Activated naive CD8-positive, alpha-beta T cell treated with anti-CD3 and anti-CD28 coated beads, Interleukin-2, amount 10 ng/mL, durations not matched to agents 7 days and 5 days (primary cell): ENCODE measurements at regions of chr9 and their contacts with region 1.

Region 1: DNA sequence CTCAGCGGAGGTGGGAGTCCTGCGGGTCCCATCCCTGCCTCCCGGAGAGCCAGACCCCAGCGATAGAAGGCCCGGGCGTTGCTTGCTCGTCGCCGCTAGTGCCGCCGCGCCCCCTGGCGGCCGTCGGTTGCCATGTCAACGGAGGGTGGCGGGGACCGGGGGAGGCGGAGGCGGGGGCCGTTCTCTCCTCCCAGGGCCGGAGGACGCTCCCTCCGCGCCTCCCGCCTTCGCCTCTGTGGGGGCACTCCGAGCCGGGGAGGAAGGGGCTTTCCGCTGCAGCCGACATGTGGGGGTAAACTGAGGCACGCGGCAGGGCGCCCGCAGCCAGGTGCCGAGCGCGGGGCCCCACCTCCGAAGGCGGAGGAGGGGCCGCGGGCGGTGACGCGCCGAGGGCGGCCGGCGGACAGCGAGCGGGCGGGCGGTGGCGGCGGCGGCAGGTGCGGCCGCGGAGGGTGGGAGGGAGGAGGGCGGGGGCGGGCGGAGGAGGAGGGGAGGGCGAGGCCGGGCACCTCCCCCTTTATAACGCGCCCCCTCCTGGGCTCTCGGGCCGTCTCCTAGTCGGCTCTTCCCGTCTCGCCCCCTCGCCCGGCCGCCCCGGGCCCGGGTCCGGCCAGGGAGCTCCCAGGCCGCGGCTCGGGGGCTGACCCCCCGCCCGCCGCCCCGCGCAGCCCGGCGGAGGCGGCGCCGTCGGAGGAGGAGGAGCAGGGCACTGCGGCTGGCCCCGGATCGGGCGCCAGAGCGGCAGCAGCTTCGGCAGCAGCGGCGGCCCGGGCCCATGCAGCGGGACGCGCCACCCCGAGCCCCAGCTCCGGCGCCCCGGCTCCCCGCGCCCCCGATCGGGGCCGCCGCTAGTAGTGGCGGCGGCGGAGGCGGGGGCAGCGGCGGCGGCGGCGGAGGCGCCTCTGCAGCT is 556 bp upstream of the CDK9 start:
- DNase-seq: peak; percentile 95
- ATAC-seq: peak; percentile 32
- H3K4me3 Mint-ChIP-seq: peak overlapping the region; percentile 90
- H3K27ac Mint-ChIP-seq: peak overlapping the region; percentile 88
- H3K4me1 Mint-ChIP-seq: peaks cover 56% of the 10 kb centered on the region
- H3K27me3 Mint-ChIP-seq: no peaks in the 10 kb centered on the region

Region 2: GRCh38 chr9:127637322-127637847 is 147.9 kb before region 1 on chr9:
- POLR2A ChIA-PET with region 1: no interaction called
- DNase-seq: no peak
- ATAC-seq: no peak
- H3K4me3 Mint-ChIP-seq: no peak overlapping the region
- H3K27ac Mint-ChIP-seq: no peak overlapping the region
- H3K4me1 Mint-ChIP-seq: peaks cover 6% of the 10 kb centered on the region
- H3K27me3 Mint-ChIP-seq: no peaks in the 10 kb centered on the region

Region 3: DNA sequence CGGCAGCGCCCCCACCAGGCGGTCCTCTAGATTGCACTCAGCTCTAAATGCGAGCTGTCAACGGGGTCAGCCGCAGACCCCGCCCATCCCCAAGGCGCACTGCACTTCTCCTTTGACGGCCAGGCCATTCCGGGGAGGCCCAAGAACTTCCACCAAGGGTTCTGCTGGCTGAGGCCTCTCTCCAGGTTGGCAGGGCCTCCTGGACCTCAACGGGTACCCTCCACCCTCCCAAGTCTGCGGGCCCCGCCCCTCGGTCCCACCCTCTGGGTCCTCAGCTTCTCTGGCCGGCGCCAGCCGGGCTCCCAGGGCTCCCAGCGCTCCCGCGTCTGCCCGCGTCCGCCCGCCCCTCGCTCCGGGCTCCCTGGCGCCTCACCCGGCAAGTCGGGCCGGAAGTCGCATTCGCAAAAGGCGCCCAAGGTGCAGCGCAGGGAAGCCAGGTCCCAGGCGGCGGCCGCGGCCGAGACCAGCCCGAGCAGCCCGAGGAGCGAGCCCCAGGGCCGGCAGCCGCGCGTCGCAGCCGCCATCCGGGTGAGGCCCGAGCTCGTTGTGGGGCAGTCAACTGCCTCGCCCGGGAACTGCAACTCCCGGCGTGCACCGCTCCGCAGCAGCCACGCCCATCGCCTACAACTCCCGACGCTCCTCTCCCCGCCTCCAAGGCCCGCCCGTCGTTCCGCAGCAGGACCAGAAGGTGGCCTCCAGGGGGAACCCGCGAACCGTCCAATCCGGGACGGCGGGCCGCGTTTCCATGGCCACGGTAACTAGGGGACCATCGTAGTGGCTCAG is 50.3 kb before region 1 on chr9 and contains the start of gene TOR2A:
- POLR2A ChIA-PET with region 1: interaction called, 29 read pairs
- DNase-seq: peak; percentile 98
- ATAC-seq: peak; percentile 88
- H3K4me3 Mint-ChIP-seq: peak within 1 kb of the TSS; percentile 87
- H3K27ac Mint-ChIP-seq: peak within 1 kb of the TSS; percentile 93
- H3K4me1 Mint-ChIP-seq: peaks cover 14% of the 10 kb centered on the region
- H3K27me3 Mint-ChIP-seq: no peaks in the 10 kb centered on the region
- total RNA-seq, gene TOR2A: 21.7 to 24.4 TPM

Region 4: GRCh38 chr9:127796225-127796813 is 11.0 kb after region 1 on chr9:
- POLR2A ChIA-PET with region 1: interaction called, 16 read pairs
- DNase-seq: no peak
- ATAC-seq: peak; percentile 11
- H3K4me3 Mint-ChIP-seq: peak overlapping the region; percentile 69
- H3K27ac Mint-ChIP-seq: peak overlapping the region; percentile 73
- H3K4me1 Mint-ChIP-seq: peaks cover 24% of the 10 kb centered on the region
- H3K27me3 Mint-ChIP-seq: no peaks in the 10 kb centered on the region

Region 5: DNA sequence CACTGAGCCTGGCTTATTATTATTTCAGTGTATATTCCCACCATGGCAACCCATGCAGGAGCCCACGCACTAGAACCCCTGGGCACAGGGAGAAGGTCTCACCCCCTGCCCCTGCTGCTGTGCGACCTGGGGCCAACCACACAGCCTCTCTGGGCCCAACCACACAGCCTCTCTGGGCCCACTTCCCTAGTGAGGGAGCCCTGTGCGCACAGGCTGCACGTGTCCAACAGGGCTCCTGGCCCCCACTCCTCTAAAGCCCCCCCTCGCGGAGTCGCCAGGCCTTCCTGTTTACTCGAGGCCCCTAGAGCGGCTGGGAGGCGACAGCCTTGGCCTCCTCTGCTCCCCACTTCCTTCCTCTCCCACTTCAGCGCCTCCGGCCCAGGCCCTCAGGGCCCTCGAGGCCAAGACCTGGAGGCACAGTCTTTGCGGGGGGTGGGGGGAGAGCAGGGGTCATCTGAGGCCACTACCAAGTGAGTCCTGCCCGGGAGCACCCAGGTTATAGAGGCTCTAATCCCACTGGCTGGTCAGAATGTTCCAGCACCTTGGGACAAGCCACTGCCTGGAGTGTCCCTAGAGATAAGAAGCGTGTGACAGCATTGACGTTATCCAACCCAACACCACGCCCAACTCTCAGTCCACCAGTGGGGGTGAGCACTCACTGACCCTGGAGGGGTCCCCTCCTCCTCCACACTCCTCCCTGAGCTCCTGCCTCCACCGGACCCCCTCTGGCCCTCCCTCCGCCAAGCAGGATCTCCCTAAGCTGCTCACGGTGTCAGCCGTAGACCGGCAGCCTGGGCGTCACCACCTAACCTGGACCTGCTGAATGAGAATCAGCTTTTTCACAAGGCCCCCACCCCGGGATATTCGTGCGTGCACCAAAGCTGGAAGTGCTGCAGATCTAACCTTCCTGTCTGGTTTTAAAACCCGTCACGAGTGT is 77.1 kb after region 1 on chr9:
- POLR2A ChIA-PET with region 1: interaction called, 11 read pairs
- DNase-seq: peak; percentile 70
- ATAC-seq: peak; percentile 84
- H3K4me3 Mint-ChIP-seq: peak overlapping the region; percentile 55
- H3K27ac Mint-ChIP-seq: peak overlapping the region; percentile 90
- H3K4me1 Mint-ChIP-seq: peaks cover 40% of the 10 kb centered on the region
- H3K27me3 Mint-ChIP-seq: no peaks in the 10 kb centered on the region

Region 6: DNA sequence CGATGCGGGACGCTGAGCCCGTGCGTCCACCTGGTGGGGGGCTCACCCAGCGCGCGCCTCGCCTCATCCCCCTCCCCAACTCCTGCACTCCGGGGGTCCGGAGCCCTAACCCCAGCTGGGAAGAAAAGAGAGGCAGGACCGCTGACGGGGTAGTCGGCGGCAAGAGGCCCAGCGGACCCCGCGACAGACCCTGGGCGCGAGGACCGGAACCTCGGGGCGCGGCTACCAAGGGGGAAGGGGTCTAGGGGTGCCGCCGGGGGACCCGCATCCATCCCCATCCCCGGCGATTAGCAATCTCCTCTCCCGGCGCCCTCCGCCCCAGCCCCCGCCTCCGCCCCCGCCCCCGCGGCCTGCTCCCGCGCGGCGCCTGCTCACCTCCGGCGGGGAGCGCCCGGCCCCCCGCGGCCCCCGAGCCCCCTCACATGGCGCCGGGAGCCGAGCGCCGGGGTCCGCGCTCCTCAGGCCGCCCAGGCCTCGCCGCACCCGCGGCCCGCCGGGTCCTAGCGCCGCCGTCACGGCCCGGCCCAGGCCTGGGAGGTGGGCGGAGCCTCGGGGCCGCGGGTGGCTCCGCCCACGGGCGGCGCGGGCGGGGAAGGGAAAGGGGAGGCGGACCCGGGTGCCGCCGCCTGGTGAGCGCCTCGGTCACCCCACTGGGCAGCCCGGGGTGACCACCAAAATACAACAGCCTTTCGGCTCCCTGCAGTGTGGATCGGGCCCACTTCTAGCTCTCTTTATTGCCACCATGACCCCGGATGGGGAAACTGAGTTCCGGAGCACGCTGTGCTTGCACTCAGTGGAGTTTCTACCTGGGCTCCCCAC is 114.1 kb after region 1 on chr9 and contains the start of gene ST6GALNAC6:
- POLR2A ChIA-PET with region 1: interaction called, 29 read pairs
- DNase-seq: peak; percentile 91
- ATAC-seq: peak; percentile 65
- H3K4me3 Mint-ChIP-seq: peak within 1 kb of the TSS; percentile 89
- H3K27ac Mint-ChIP-seq: peak within 1 kb of the TSS; percentile 82
- H3K4me1 Mint-ChIP-seq: peaks cover 38% of the 10 kb centered on the region
- H3K27me3 Mint-ChIP-seq: no peaks in the 10 kb centered on the region
- total RNA-seq, gene ST6GALNAC6: 105 to 112 TPM

Region 7: GRCh38 chr9:127991042-127991756 is 205.9 kb after region 1 on chr9:
- POLR2A ChIA-PET with region 1: no interaction called
- DNase-seq: no peak
- ATAC-seq: no peak
- H3K4me3 Mint-ChIP-seq: no peak overlapping the region
- H3K27ac Mint-ChIP-seq: no peak overlapping the region
- H3K4me1 Mint-ChIP-seq: peaks cover 11% of the 10 kb centered on the region
- H3K27me3 Mint-ChIP-seq: peaks cover 2% of the 10 kb centered on the region